CD8-positive, alpha-beta T cell (primary cell): ENCODE measurements at regions of chr5 and their contacts with region 1.

Region 1: DNA sequence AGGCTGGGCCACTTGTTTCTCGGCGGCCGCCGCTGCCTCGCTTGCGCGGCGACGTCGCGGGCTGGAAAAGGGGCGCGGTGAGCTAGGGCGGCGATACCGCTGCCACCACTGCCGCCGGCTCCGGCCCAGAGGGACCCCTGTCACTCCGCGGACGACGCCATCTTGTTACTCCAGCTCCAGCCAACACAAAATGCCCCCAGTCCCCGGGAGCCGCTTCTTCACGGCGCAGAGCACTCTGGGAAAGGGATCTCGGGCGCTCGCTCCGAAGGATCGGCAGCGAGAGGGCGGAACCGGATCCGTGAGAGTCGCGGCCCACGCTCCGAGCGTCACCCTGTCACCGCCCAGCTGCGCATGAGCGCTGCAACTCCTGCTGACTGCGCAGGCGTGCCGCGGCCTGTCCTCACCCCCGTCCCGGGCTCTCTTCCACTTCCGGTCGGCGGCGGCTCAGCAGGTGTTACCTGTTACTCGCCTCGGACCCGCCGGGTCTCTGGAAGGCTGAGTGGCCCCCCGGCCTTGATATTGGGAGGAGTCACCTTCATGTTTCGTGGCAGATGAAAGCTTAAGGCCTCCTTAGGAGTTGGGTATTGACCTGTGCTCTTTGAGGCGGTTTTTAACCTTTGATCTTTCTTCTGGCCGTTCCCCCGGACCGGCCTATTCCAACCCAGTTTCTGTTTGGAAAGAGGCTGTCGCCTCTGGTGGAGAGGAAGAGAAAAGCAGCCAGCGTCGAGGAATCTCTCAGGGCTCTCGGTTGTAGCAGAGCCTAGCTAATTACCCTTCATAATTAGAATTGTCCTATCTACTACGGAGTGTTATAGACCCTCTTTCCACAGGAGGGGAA is at the start of gene CSNK1A1:
- DNase-seq: peak; percentile 98 to 100 (median 99)
- ATAC-seq: peak; percentile 85
- H3K4me3 ChIP-seq: peak within 1 kb of the TSS; percentile 90 to 94
- H3K4me3 Mint-ChIP-seq: peak within 1 kb of the TSS; percentile 97
- H3K27ac ChIP-seq: peak within 1 kb of the TSS; percentile 88 to 92
- H3K27ac Mint-ChIP-seq: peak within 1 kb of the TSS; percentile 95
- H3K4me1 ChIP-seq: peaks cover 27% of the 10 kb centered on the region
- H3K4me1 Mint-ChIP-seq: peaks cover 30% of the 10 kb centered on the region
- H3K27me3 ChIP-seq: no peaks in the 10 kb centered on the region
- H3K27me3 Mint-ChIP-seq: no peaks in the 10 kb centered on the region
- CTCF ChIP-seq: peak; percentile 62
- total RNA-seq, gene CSNK1A1: 213 to 221 TPM

Region 2: DNA sequence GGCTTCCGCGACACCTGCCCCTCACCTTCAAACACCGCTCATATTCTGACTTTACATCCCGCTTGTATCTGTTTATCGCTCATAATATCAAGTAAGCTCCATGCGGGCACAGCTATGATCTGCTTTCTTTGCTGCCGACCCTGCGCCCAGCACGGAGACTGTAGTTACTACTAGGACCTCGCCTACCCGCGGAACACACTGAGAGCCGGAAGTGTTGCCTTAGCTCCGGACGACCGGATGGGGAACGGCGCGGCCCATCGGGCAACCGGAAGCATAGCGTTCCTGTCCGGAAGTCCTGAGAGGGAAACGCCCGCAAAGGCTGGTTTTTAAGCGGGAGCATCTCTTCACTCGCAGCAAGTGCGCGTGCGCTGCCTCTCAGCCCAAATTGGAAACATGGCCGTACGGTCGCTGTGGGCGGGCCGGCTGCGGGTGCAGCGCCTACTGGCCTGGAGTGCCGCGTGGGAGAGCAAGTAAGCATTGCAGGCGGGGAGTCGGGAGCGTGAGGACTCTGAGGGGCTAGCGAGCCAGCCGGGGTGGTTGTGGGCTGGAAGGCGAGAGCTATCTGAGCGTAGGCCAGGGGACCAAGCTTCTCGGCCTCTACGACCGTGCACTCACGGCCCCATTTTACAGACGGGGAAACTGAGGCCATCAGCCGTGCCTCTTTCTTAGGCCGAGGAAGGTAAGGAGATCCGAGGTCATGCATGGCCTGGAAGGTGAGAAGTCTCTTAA is 206.1 kb before region 1 on chr5 and contains the start of gene GRPEL2:
- CTCF ChIA-PET with region 1: no interaction called
- POLR2A ChIA-PET with region 1: interaction called, 12 read pairs
- intact Hi-C with region 1: no loop called
- DNase-seq: peak; percentile 65 to 93 (median 84)
- ATAC-seq: peak; percentile 65
- H3K4me3 ChIP-seq: peak within 1 kb of the TSS; percentile 94 to 95
- H3K4me3 Mint-ChIP-seq: peak within 1 kb of the TSS; percentile 92
- H3K27ac ChIP-seq: peak within 1 kb of the TSS; percentile 63 to 88
- H3K27ac Mint-ChIP-seq: peak within 1 kb of the TSS; percentile 90
- H3K4me1 ChIP-seq: peaks cover 53% of the 10 kb centered on the region
- H3K4me1 Mint-ChIP-seq: peaks cover 60% of the 10 kb centered on the region
- H3K27me3 ChIP-seq: no peaks in the 10 kb centered on the region
- H3K27me3 Mint-ChIP-seq: no peaks in the 10 kb centered on the region
- CTCF ChIP-seq: no peak
- total RNA-seq, gene GRPEL2: 9.1 to 9.7 TPM

Region 3: DNA sequence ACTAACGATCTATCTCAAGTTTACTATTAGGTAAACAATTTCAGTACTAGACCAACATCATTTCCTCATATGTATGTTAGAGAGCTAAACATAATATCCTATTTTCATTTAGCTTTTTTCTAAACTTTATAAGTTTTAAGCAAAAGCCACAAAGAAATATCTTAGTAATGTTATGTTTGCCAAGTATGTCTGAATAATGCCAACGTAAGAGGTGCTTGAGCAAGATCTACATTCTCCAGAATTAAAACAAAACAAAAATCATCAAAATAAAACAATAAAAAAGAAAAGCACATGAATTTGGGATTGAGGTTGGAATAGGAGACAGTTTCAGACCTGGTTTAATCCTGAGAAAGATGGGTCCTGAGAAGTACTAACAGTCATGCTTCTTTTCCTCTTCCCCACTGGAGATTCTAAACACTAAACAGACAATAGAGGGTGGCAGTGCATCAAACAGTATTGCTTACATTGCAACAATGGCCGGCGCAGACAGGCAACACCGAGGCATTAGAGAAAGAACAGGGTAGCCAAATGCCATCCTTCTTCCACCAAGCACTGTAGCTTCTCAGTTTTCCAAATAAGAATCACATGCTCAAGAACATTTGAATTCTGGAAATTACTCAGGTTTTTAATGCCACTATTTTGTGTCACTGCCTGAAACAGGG is 33.8 kb before region 1 on chr5:
- CTCF ChIA-PET with region 1: interaction called, 3 read pairs
- POLR2A ChIA-PET with region 1: interaction called, 4 read pairs
- intact Hi-C with region 1: loop called in 1 of 2 experiments (anchors 5 kb)
- DNase-seq: no peak
- ATAC-seq: no peak
- H3K4me3 ChIP-seq: no peak overlapping the region
- H3K4me3 Mint-ChIP-seq: no peak overlapping the region
- H3K27ac ChIP-seq: no peak overlapping the region
- H3K27ac Mint-ChIP-seq: peak overlapping the region; percentile 82
- H3K4me1 ChIP-seq: peaks cover 46% of the 10 kb centered on the region
- H3K4me1 Mint-ChIP-seq: peaks cover 76% of the 10 kb centered on the region
- H3K27me3 ChIP-seq: no peaks in the 10 kb centered on the region
- H3K27me3 Mint-ChIP-seq: no peaks in the 10 kb centered on the region
- CTCF ChIP-seq: no peak

Region 4: GRCh38 chr5:149628246-149628645 is 76.8 kb after region 1 on chr5:
- CTCF ChIA-PET with region 1: no interaction called
- POLR2A ChIA-PET with region 1: no interaction called
- intact Hi-C with region 1: no loop called
- DNase-seq: no peak
- ATAC-seq: no peak
- H3K4me3 ChIP-seq: no peak overlapping the region
- H3K4me3 Mint-ChIP-seq: no peak overlapping the region
- H3K27ac ChIP-seq: no peak overlapping the region
- H3K27ac Mint-ChIP-seq: no peak overlapping the region
- H3K4me1 ChIP-seq: no peaks in the 10 kb centered on the region
- H3K4me1 Mint-ChIP-seq: no peaks in the 10 kb centered on the region
- H3K27me3 ChIP-seq: no peaks in the 10 kb centered on the region
- H3K27me3 Mint-ChIP-seq: no peaks in the 10 kb centered on the region
- CTCF ChIP-seq: no peak

Region 5: DNA sequence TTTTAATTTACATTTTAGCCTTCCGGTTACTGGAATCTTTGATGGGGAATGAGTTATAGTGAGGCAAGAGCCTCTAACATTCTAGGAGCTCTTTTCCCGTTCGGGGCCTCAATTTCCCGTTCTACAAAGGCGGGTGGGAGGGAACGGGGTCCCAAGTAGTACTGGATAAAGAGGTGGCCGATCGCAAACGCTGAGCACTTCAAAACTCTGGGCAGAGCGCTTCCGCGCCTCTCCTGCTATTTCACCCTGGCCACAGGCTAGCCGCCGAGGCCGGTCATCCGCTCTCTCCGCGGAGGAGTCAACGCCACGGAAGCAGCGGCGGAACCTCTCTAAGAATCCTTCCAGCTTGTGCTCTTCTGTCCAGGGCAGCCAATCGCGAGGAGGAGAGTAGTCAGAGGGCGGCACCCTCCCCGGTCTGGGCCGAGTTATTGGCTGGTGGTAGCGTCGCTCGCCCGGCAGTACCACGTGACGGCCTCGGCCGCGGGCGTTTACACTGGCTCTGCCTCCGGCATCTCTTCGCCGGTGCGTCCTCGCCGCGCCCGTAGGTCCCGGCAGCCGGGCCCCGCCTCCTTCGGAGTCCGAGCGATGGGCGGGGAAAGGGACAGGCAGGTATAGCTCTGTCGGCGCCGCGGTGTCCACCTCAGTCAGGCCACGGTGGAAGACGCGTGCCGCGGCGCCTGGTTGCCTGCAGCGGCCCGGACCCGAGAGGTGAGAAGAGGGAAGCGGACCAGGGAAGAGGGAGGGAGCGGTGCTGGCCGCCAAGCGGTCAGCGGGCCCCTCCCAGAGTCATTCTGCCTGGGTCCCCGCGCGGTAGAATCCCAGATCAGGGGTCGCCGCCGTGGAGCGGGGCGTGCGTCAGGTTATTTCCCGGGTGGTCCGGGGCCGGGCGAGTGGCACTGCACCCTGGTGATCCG is 409.1 kb after region 1 on chr5 and contains the start of gene SLC26A2:
- CTCF ChIA-PET with region 1: no interaction called
- POLR2A ChIA-PET with region 1: no interaction called
- intact Hi-C with region 1: loop called (anchors 1 to 5 kb)
- DNase-seq: peak; percentile 83 to 97 (median 93)
- ATAC-seq: peak; percentile 95
- H3K4me3 ChIP-seq: peak within 1 kb of the TSS; percentile 85 to 99
- H3K4me3 Mint-ChIP-seq: peak within 1 kb of the TSS; percentile 97
- H3K27ac ChIP-seq: peak within 1 kb of the TSS; percentile 66 to 77
- H3K27ac Mint-ChIP-seq: peak within 1 kb of the TSS; percentile 97
- H3K4me1 ChIP-seq: peaks cover 26% of the 10 kb centered on the region
- H3K4me1 Mint-ChIP-seq: peaks cover 39% of the 10 kb centered on the region
- H3K27me3 ChIP-seq: no peaks in the 10 kb centered on the region
- H3K27me3 Mint-ChIP-seq: no peaks in the 10 kb centered on the region
- CTCF ChIP-seq: no peak
- total RNA-seq, gene SLC26A2: 2.0 to 2.2 TPM